Sciatic nerve (tissue), 2 donors: ENCODE measurements at regions of chr20 and their contacts with region 1.

Region 1: DNA sequence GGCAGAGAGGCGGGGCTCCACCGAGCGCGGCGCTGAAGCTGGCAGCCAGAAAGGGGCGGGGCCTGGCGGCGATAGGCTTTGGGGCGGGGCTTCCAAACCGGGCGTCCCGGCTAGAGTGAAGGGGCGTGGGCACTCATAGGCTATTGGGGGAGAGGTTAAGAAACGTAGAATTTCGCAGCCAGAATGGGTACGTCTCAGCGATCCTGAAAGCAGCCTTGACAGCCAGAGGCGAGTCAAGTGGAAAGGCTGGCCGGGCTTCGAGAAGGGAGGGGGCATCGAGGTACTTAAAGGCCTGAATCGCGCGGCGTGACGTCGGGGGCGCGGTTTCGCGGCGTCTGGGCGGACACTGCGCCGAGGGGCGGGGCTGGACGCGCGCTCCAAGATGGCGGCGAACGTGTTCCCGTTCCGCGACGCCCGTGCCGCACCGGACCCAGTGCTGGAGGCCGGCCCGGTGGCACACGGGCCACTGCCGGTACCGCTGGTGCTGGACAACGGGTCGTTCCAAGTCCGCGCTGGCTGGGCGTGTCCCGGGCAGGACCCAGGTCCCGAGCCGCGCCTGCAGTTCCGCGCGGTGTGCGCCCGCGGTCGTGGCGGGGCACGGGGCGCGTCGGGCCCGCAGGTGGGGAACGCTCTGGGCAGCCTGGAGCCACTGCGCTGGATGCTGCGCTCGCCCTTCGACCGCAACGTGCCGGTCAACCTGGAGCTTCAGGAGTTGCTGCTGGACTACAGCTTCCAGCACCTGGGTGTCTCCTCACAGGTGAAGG is at the start of gene ACTR5:
- DNase-seq: peak; percentile 98
- ATAC-seq: peak; percentile 100
- total RNA-seq, gene ACTR5: 8.5 TPM

Region 2: DNA sequence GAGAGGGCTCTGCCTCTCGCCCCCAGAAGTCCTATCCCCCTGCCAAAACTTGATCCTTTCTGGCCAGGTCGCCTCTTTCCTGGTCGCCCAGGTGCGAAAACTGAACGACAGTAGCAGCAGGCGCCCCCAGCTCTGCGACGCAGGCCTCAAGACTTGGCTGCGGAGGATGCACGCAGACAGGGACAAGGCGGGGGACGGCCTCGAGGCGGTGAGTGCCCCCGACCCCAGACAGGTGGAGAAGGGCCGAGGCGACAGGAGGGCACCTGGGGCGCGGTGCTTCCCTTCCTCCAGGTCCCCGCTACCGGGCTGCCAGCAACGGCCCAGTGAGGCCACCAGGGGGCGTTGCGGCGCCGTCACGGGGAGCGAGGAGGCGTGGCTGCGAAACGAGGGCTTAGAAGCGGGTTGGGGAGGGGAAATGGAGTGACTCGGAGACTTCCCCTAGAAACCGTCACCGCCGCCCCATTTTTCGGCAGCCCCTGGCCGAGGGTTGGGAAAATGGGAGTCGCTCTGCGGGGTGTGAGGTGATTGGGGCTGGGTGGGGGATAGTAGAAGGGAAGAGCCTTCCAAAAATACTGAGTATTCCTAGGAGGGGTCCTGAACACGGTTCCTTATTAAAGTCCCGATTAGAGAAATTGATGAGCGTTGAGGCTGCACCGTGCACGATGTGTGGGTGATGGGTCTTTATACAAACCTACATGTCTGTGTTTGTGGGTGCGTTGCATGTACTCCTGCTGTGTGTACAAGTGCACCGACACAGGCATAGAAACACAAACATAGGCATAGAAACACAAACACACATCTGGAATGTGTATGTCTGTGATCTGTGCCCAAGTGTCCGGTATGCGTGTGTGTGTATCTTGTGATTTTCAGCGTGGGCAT is 102.1 kb before region 1 on chr20:
- intact Hi-C with region 1: loop called (anchors 10 kb)
- DNase-seq: peak; percentile 83
- ATAC-seq: peak; percentile 82

Region 3: DNA sequence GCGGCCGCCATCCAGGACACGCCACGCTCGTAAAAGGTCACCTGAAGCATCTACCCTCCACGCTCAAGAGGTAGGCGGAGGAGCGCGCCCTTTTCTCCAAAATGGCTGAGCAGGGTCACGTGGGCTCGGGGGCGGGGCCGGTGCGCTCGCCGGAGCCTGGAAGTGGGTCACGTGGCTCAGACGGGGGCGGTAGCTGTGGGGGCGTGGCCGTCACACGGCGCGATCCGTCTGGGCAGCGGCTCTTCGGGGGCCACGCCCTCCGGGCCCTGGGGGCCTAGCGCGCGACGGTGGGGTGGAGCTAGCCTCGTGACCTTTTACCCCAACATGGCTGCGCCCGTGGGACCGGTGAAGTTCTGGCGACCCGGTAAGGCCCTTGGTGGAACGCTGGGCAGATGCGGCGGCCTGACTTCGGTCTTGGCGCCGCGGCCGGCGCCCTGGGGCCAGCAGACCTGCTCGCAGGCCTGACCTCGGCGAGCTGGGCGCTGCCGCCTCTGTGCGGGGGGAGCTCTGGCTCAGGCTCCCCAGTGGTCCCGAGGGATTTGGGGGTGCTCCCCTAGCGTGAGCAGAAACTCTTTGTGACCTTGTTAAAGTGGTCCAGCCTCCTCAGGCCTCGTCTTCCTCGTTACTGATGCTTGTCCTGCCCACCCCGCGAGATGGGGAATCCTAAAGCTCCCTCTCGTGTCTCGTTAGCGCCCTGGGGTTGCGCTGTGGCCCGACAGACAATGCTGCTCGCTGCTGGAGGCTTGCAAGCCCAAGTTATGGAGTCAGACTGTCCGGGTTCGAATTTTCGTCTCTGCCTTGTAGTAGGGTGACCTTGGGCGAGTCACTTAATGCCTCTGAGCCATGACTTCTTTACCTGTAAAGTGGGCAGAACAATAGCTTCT is 214.0 kb after region 1 on chr20 and contains the start of gene DHX35:
- intact Hi-C with region 1: no loop called
- DNase-seq: peak; percentile 99
- ATAC-seq: peak; percentile 100
- total RNA-seq, gene DHX35: 11.3 TPM

Region 4: DNA sequence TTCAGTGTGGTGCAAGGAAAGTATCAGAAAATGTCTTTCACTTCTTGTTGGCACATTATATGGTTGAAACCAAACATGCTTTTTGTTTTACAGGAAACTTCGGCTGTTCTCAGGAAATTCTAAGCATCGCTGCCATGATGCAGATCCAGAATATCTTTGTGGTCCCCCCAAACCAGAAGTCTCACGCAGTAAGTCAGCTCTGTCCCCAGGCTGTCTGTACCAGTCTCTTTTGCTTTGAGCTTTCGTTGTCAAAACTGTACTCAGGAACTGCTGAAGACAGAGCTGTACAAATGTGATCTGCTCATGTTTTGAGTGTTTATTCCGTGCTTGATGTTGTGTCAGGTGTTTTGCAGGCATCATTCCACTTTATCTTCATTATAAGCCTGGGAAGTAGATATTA is 273.5 kb after region 1 on chr20:
- intact Hi-C with region 1: no loop called
- DNase-seq: no peak
- ATAC-seq: no peak

Region 5: DNA sequence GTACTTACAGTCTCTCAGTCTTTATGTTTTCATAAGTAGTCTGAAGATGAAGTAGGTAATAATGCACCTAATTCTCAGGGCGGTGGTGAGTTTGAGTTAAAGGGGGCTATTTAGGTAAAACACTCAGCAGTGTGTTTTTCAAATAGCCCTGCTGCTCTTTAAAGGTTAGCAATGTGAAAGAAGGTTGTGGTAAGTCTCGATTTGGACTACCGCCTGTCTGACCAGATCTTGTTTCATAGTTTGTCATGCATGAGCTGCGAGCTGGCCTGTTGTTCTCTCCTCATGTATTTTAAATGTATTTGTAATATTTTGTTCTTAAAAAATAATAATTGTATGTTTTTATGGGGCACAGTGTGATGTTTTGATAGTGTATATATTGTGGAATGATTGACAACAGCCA is 554.0 kb after region 1 on chr20:
- intact Hi-C with region 1: no loop called
- DNase-seq: no peak
- ATAC-seq: no peak